GM12878 (cell line): ENCODE measurements at regions of chr15 and their contacts with region 1.

Region 1: GRCh38 chr15:40344631-40345120 is 3.9 kb upstream of the CCDC9B start:
- DNase-seq: no peak
- ATAC-seq: peak; percentile 91
- H3K4me3 ChIP-seq: no peak overlapping the region
- H3K27ac ChIP-seq: no peak overlapping the region
- H3K4me1 ChIP-seq: no peaks in the 10 kb centered on the region
- H3K27me3 ChIP-seq: no peaks in the 10 kb centered on the region; a peak in 1 of 4 replicates
- CTCF ChIP-seq: peak; percentile 77 to 84 (median 83)
- EP300 ChIP-seq: no peak
- POLR2A ChIP-seq: no peak
- RAD21 ChIP-seq: peak; percentile 79

Region 2: GRCh38 chr15:40367686-40368611 is 23.3 kb after region 1 on chr15:
- CTCF ChIA-PET with region 1: interaction called, 11 read pairs
- POLR2A ChIA-PET with region 1: no interaction called
- RAD21 ChIA-PET with region 1: interaction called, 4 read pairs
- SMC1A ChIA-PET with region 1: interaction called, 3 read pairs
- in situ Hi-C with region 1: no loop called
- intact Hi-C with region 1: no loop called
- DNase-seq: peak; percentile 27
- ATAC-seq: peak; percentile 93
- H3K4me3 ChIP-seq: peak overlapping the region; percentile 2; the same call in 1 of the 2 replicates
- H3K27ac ChIP-seq: no peak overlapping the region
- H3K4me1 ChIP-seq: peaks cover 8% of the 10 kb centered on the region
- H3K27me3 ChIP-seq: peaks cover 3 to 5% of the 10 kb centered on the region in 2 experiments
- CTCF ChIP-seq: peak; percentile 67 to 88 (median 81)
- EP300 ChIP-seq: no peak
- POLR2A ChIP-seq: no peak; the same call in 1 of the 2 replicates
- RAD21 ChIP-seq: peak; percentile 54

Region 3: GRCh38 chr15:40398413-40398873 is 53.8 kb after region 1 on chr15:
- CTCF ChIA-PET with region 1: interaction called, 12 read pairs
- POLR2A ChIA-PET with region 1: no interaction called
- RAD21 ChIA-PET with region 1: no interaction called
- SMC1A ChIA-PET with region 1: interaction called, 3 read pairs
- in situ Hi-C with region 1: no loop called
- intact Hi-C with region 1: no loop called
- DNase-seq: peak; percentile 58
- ATAC-seq: peak; percentile 93
- H3K4me3 ChIP-seq: 0 out of 2 replicates have a peak overlapping the region, but pooled peaks have one; percentile 26
- H3K27ac ChIP-seq: no peak overlapping the region
- H3K4me1 ChIP-seq: no peaks in the 10 kb centered on the region
- H3K27me3 ChIP-seq: no peaks in the 10 kb centered on the region
- CTCF ChIP-seq: no peak
- EP300 ChIP-seq: no peak
- POLR2A ChIP-seq: no peak
- RAD21 ChIP-seq: no peak

Region 4: GRCh38 chr15:40421246-40422157 is 76.8 kb after region 1 on chr15:
- CTCF ChIA-PET with region 1: interaction called, 111 read pairs
- POLR2A ChIA-PET with region 1: no interaction called
- RAD21 ChIA-PET with region 1: interaction called, 17 read pairs
- SMC1A ChIA-PET with region 1: interaction called, 7 read pairs
- in situ Hi-C with region 1: loop called (anchors 5 kb)
- intact Hi-C with region 1: loop called (anchors 1 kb)
- DNase-seq: no peak
- ATAC-seq: peak; percentile 99
- H3K4me3 ChIP-seq: no peak overlapping the region
- H3K27ac ChIP-seq: no peak overlapping the region
- H3K4me1 ChIP-seq: no peaks in the 10 kb centered on the region
- H3K27me3 ChIP-seq: no peaks in the 10 kb centered on the region
- CTCF ChIP-seq: peak; percentile 93 to 98 (median 97)
- EP300 ChIP-seq: no peak
- POLR2A ChIP-seq: peak; percentile 73
- RAD21 ChIP-seq: peak; percentile 95

Region 5: DNA sequence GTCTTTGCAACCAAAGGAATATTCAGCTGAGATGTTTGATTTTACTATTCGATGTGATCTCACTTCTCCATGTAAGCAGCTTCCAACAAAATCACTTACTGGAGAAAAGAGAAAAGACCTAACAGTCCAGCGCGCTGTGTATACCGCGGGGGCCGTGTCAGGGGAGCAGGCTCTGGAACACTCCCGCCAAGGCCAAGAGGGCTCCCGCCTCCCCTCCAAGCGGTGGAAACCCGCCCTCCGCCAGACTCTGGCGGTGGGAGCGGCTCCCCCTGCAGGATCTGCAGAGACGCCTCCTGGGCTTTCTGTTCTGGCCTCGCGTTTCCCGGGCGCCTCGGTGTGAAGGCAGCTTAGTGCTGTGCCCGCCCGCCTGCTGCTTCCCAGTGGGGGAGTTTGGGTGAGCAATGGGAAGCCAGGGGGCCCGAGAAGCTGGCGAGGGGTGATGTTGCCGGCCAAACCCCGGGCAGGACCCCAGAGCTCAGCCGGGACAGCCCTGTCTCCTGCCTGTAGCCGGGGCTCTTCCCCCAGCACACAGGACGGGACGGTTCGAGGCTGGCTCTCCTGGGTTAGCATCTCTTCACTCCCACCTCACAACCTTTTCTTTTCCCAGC is 162.4 kb after region 1 on chr15:
- CTCF ChIA-PET with region 1: interaction called, 3 read pairs
- POLR2A ChIA-PET with region 1: no interaction called
- RAD21 ChIA-PET with region 1: interaction called, 3 read pairs
- SMC1A ChIA-PET with region 1: no interaction called
- in situ Hi-C with region 1: no loop called
- intact Hi-C with region 1: loop called (anchors 10 kb)
- DNase-seq: no peak
- ATAC-seq: peak; percentile 65
- H3K4me3 ChIP-seq: no peak overlapping the region
- H3K27ac ChIP-seq: no peak overlapping the region
- H3K4me1 ChIP-seq: peaks cover 9% of the 10 kb centered on the region
- H3K27me3 ChIP-seq: no peaks in the 10 kb centered on the region
- CTCF ChIP-seq: peak; percentile 65 to 82 (median 73)
- EP300 ChIP-seq: no peak
- POLR2A ChIP-seq: no peak
- RAD21 ChIP-seq: peak; percentile 61

Region 6: GRCh38 chr15:40960926-40961325 is 616.2 kb after region 1 on chr15:
- CTCF ChIA-PET with region 1: no interaction called
- POLR2A ChIA-PET with region 1: no interaction called
- RAD21 ChIA-PET with region 1: no interaction called
- SMC1A ChIA-PET with region 1: no interaction called
- in situ Hi-C with region 1: no loop called
- intact Hi-C with region 1: no loop called
- DNase-seq: no peak
- ATAC-seq: no peak
- H3K4me3 ChIP-seq: no peak overlapping the region
- H3K27ac ChIP-seq: no peak overlapping the region
- H3K4me1 ChIP-seq: no peaks in the 10 kb centered on the region
- H3K27me3 ChIP-seq: no peaks in the 10 kb centered on the region
- CTCF ChIP-seq: no peak
- EP300 ChIP-seq: no peak
- POLR2A ChIP-seq: no peak
- RAD21 ChIP-seq: no peak